HCT116 (cell line): ENCODE measurements at regions of chr10 and their contacts with region 1.

Region 1: GRCh38 chr10:87659571-87660483 is at the start of gene PAPSS2:
- DNase-seq: no peak
- ATAC-seq: peak; percentile 83
- H3K4me3 ChIP-seq: peak within 1 kb of the TSS; percentile 64 to 70
- H3K27ac ChIP-seq: no peak within 1 kb of the TSS; the same call in 1 of the 2 replicates
- H3K4me1 ChIP-seq: peaks cover 6 to 34% of the 10 kb centered on the region in 2 experiments; a peak in 3 of 4 replicates
- H3K27me3 ChIP-seq: no peaks in the 10 kb centered on the region
- CTCF ChIP-seq: no peak
- POLR2A ChIP-seq: no peak
- RAD21 ChIP-seq: no peak
- total RNA-seq, gene PAPSS2: 14.6 TPM

Region 2: GRCh38 chr10:87531908-87532622 is 127.8 kb before region 1 on chr10:
- CTCF ChIA-PET with region 1: no interaction called
- POLR2A ChIA-PET with region 1: no interaction called
- RAD21 ChIA-PET with region 1: no interaction called
- intact Hi-C with region 1: loop called (anchors 5 kb)
- DNase-seq: no peak
- ATAC-seq: no peak
- H3K4me3 ChIP-seq: no peak overlapping the region
- H3K27ac ChIP-seq: no peak overlapping the region
- H3K4me1 ChIP-seq: no peaks in the 10 kb centered on the region
- H3K27me3 ChIP-seq: no peaks in the 10 kb centered on the region
- CTCF ChIP-seq: no peak
- POLR2A ChIP-seq: no peak
- RAD21 ChIP-seq: no peak

Region 3: GRCh38 chr10:87734987-87735827 is 75.4 kb after region 1 on chr10:
- CTCF ChIA-PET with region 1: interaction called, 4 read pairs
- POLR2A ChIA-PET with region 1: no interaction called
- RAD21 ChIA-PET with region 1: interaction called in 1 of 2 experiments, 3 read pairs
- intact Hi-C with region 1: loop called (anchors 1 kb)
- DNase-seq: peak; percentile 29
- ATAC-seq: peak; percentile 97
- H3K4me3 ChIP-seq: no peak overlapping the region
- H3K27ac ChIP-seq: no peak overlapping the region
- H3K4me1 ChIP-seq: peaks cover 6% of the 10 kb centered on the region in 2 experiments
- H3K27me3 ChIP-seq: no peaks in the 10 kb centered on the region
- CTCF ChIP-seq: peak; percentile 70 to 88 (median 83); a peak in 5 of 6 replicates
- POLR2A ChIP-seq: no peak
- RAD21 ChIP-seq: peak; percentile 91

Region 4: GRCh38 chr10:87771871-87772500 is 112.2 kb after region 1 on chr10:
- CTCF ChIA-PET with region 1: no interaction called
- POLR2A ChIA-PET with region 1: no interaction called
- RAD21 ChIA-PET with region 1: no interaction called
- intact Hi-C with region 1: loop called (anchors 2 kb)
- DNase-seq: no peak
- ATAC-seq: peak; percentile 60
- H3K4me3 ChIP-seq: no peak overlapping the region
- H3K27ac ChIP-seq: no peak overlapping the region
- H3K4me1 ChIP-seq: peaks cover 16 to 30% of the 10 kb centered on the region in 2 experiments
- H3K27me3 ChIP-seq: no peaks in the 10 kb centered on the region
- CTCF ChIP-seq: peak; percentile 31 to 57 (median 40); a peak in 4 of 6 replicates
- POLR2A ChIP-seq: no peak
- RAD21 ChIP-seq: peak; percentile 64

Region 5: GRCh38 chr10:87861953-87862678 is 202.3 kb after region 1 on chr10:
- CTCF ChIA-PET with region 1: no interaction called
- POLR2A ChIA-PET with region 1: interaction called, 6 read pairs
- RAD21 ChIA-PET with region 1: no interaction called
- intact Hi-C with region 1: loop called (anchors 5 kb)
- DNase-seq: peak; percentile 98
- ATAC-seq: peak; percentile 71
- H3K4me3 ChIP-seq: peak overlapping the region; percentile 84 to 93
- H3K27ac ChIP-seq: peak overlapping the region; percentile 94
- H3K4me1 ChIP-seq: peaks cover 14 to 28% of the 10 kb centered on the region in 2 experiments; a peak in 3 of 4 replicates
- H3K27me3 ChIP-seq: no peaks in the 10 kb centered on the region
- CTCF ChIP-seq: no peak
- POLR2A ChIP-seq: peak; percentile 87
- RAD21 ChIP-seq: no peak; the same call in 1 of the 2 replicates

Region 6: GRCh38 chr10:88553116-88553752 is 893.4 kb after region 1 on chr10:
- CTCF ChIA-PET with region 1: no interaction called
- POLR2A ChIA-PET with region 1: no interaction called
- RAD21 ChIA-PET with region 1: no interaction called
- intact Hi-C with region 1: loop called (anchors 10 kb)
- DNase-seq: peak; percentile 54
- ATAC-seq: peak; percentile 97
- H3K4me3 ChIP-seq: no peak overlapping the region
- H3K27ac ChIP-seq: no peak overlapping the region
- H3K4me1 ChIP-seq: peaks cover 0 to 7% of the 10 kb centered on the region in 2 experiments; a peak in 2 of 4 replicates
- H3K27me3 ChIP-seq: no peaks in the 10 kb centered on the region
- CTCF ChIP-seq: peak; percentile 79 to 85 (median 84)
- POLR2A ChIP-seq: no peak
- RAD21 ChIP-seq: peak; percentile 91